Aorta (tissue), 5 donors: ENCODE measurements at regions of chr10 and their contacts with region 1.

Region 1: GRCh38 chr10:50552771-50553535 is 70.8 kb downstream of the SGMS1 start:
- DNase-seq: no peak
- ATAC-seq: no peak
- H3K4me3 ChIP-seq: no peak overlapping the region
- H3K27ac ChIP-seq: peak overlapping the region; percentile 45 to 51
- H3K4me1 ChIP-seq: peaks cover 8 to 10% of the 10 kb centered on the region in 2 donors
- H3K27me3 ChIP-seq: no peaks in the 10 kb centered on the region

Region 2: GRCh38 chr10:50325449-50326171 is 227.3 kb before region 1 on chr10:
- intact Hi-C with region 1: loop called in 1 of 2 experiments (anchors 5 kb)
- DNase-seq: peak; percentile 84 to 86
- ATAC-seq: peak; percentile 83
- H3K4me3 ChIP-seq: peak overlapping the region in 1 of 2 donors; percentile 64
- H3K27ac ChIP-seq: peak overlapping the region; percentile 87 to 90
- H3K4me1 ChIP-seq: peaks cover 4 to 7% of the 10 kb centered on the region in 2 donors
- H3K27me3 ChIP-seq: no peaks in the 10 kb centered on the region

Region 3: GRCh38 chr10:50431791-50432190 is 121.2 kb before region 1 on chr10:
- intact Hi-C with region 1: loop called in 1 of 2 experiments (anchors 5 kb)
- DNase-seq: peak in 1 of 2 donors; percentile 52
- ATAC-seq: peak; percentile 56
- H3K4me3 ChIP-seq: peak overlapping the region in 1 of 2 donors; percentile 76
- H3K27ac ChIP-seq: peak overlapping the region; percentile 36 to 82
- H3K4me1 ChIP-seq: peaks cover 0 to 4% of the 10 kb centered on the region in 2 donors
- H3K27me3 ChIP-seq: no peaks in the 10 kb centered on the region

Region 4: DNA sequence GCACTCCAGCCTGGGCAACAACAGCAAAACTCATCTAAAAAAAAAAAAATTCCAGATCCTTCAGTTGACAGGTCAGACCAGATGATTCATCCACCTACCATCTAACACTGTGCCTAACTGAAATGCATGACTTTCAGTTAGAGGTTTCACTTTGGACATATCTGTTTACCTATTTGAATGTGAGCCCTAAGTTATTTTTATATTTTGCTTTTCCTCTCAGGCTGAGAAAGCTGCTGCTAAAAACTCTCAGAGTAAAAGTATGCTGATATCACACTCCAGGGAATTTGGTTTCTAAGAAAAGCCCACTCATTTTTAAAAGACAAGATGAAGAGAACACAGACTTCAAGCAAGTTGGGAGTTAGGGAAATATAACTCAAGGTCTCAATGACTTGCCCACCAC is 55.2 kb before region 1 on chr10:
- intact Hi-C with region 1: loop called (anchors 5 to 10 kb)
- DNase-seq: no peak
- ATAC-seq: peak; percentile 59
- H3K4me3 ChIP-seq: peak overlapping the region in 1 of 2 donors; percentile 48
- H3K27ac ChIP-seq: peak overlapping the region in 1 of 2 donors; percentile 44
- H3K4me1 ChIP-seq: no peaks in the 10 kb centered on the region
- H3K27me3 ChIP-seq: no peaks in the 10 kb centered on the region

Region 5: GRCh38 chr10:50604049-50604640 is 51.2 kb after region 1 on chr10:
- intact Hi-C with region 1: no loop called
- DNase-seq: no peak
- ATAC-seq: no peak
- H3K4me3 ChIP-seq: no peak overlapping the region
- H3K27ac ChIP-seq: no peak overlapping the region
- H3K4me1 ChIP-seq: peaks cover 3 to 8% of the 10 kb centered on the region in 2 donors
- H3K27me3 ChIP-seq: no peaks in the 10 kb centered on the region

Region 6: GRCh38 chr10:50614444-50615137 is 61.6 kb after region 1 on chr10:
- intact Hi-C with region 1: loop called in 1 of 2 experiments (anchors 5 kb)
- DNase-seq: no peak
- ATAC-seq: no peak
- H3K4me3 ChIP-seq: no peak overlapping the region
- H3K27ac ChIP-seq: no peak overlapping the region
- H3K4me1 ChIP-seq: peaks cover 2% of the 10 kb centered on the region in 2 donors
- H3K27me3 ChIP-seq: no peaks in the 10 kb centered on the region